Ovary (tissue), 10 donors: ENCODE measurements at regions of chr5 and their contacts with region 1.

Region 1: DNA sequence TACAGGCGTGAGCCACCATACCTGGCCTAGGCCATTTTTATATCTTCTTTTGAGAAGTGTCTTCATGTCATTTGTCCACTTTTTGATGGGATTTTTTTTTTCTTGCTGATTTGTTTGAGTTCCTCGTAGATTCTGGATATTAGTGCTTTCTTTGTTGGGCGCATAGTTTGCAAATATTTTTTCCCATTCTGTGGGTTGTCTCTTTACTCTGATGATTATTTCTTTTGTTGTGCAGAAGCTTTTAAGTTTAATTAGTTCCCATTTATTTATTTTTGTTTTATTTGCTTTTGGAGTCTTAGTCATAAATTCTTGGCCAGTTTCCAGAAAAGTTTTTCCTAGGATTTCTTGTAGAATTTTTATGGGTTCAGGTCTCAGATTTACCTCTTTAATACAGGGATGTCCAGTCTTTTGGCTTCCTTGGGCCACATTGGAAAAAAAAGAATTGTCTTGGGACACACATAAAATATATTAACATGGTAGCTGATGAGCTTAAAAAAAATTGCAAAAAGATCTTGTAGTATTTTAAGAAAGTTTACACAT is 122.0 kb downstream of the WDR70 start:
- DNase-seq: no peak
- H3K4me3 ChIP-seq: no peak overlapping the region
- H3K27ac ChIP-seq: no peak overlapping the region
- H3K4me1 ChIP-seq: no peaks in the 10 kb centered on the region
- H3K27me3 ChIP-seq: no peaks in the 10 kb centered on the region
- CTCF ChIP-seq: no peak
- EP300 ChIP-seq: no peak
- POLR2A ChIP-seq: no peak

Region 2: DNA sequence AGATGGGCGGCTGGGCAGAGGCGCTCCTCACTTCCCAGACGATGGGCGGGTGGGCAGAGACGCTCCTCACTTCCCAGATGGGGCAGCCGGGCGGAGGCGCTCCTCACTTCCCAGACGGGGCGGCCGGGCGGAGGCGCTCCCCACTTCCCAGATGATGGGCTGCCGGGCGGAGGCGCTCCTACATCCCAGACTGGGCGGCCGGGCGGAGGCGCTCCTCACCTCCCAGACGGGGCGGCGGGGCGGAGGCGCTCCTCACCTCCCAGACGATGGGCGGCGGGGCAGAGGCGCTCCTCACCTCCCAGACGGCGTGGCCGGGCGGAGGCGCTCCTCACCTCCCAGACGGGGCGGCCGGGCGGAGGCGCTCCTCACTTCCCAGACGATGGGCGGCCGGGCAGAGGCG is 18.2 kb after region 1 on chr5:
- intact Hi-C with region 1: loop called in 1 of 4 experiments (anchors 2 kb)
- DNase-seq: no peak
- H3K4me3 ChIP-seq: no peak overlapping the region
- H3K27ac ChIP-seq: no peak overlapping the region
- H3K4me1 ChIP-seq: no peaks in the 10 kb centered on the region
- H3K27me3 ChIP-seq: peaks cover 5% of the 10 kb centered on the region
- CTCF ChIP-seq: no peak
- EP300 ChIP-seq: no peak
- POLR2A ChIP-seq: no peak